Breast epithelium (tissue), 4 donors: ENCODE measurements at regions of chr3 and their contacts with region 1.

Region 1: DNA sequence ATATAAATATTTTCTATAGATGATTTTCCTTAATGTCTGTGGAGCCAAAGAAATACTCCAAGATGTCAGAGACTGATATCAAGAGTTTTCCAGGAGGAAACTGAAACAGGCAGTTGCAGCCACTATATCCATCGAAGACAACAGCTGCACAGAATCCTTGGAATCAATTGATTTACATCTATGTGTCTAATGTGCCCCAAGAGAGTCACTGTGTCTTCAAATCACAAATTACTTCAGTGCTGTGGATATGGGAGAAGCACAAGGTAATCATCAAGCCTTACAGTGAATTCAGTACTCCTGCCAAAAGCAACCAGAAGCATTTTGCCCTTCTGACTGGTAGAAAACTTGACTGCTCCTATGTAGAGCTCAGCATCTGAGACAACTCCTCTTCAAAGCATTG is 51.1 kb downstream of the CPNE4 start:
- DNase-seq: no peak
- H3K4me3 ChIP-seq: no peak overlapping the region
- H3K27ac ChIP-seq: no peak overlapping the region
- H3K4me1 ChIP-seq: no peaks in the 10 kb centered on the region
- H3K27me3 ChIP-seq: no peaks in the 10 kb centered on the region
- CTCF ChIP-seq: no peak
- POLR2A ChIP-seq: no peak

Region 2: GRCh38 chr3:131995891-131996290 is 12.2 kb after region 1 on chr3:
- intact Hi-C with region 1: loop called (anchors 1 kb)
- DNase-seq: no peak
- H3K4me3 ChIP-seq: no peak overlapping the region
- H3K27ac ChIP-seq: no peak overlapping the region
- H3K4me1 ChIP-seq: no peaks in the 10 kb centered on the region
- H3K27me3 ChIP-seq: no peaks in the 10 kb centered on the region
- CTCF ChIP-seq: no peak
- POLR2A ChIP-seq: no peak

Region 3: GRCh38 chr3:132029182-132029902 is 45.7 kb after region 1 on chr3:
- intact Hi-C with region 1: no loop called
- DNase-seq: peak; percentile 41 to 78
- H3K4me3 ChIP-seq: no peak overlapping the region
- H3K27ac ChIP-seq: no peak overlapping the region
- H3K4me1 ChIP-seq: no peaks in the 10 kb centered on the region
- H3K27me3 ChIP-seq: peaks cover 0 to 23% of the 10 kb centered on the region in 2 donors
- CTCF ChIP-seq: peak in 2 of 3 donors; percentile 36 to 61
- POLR2A ChIP-seq: no peak